ENCODE measurements at regions of chr20 and their contacts with region 1.

Region 1: DNA sequence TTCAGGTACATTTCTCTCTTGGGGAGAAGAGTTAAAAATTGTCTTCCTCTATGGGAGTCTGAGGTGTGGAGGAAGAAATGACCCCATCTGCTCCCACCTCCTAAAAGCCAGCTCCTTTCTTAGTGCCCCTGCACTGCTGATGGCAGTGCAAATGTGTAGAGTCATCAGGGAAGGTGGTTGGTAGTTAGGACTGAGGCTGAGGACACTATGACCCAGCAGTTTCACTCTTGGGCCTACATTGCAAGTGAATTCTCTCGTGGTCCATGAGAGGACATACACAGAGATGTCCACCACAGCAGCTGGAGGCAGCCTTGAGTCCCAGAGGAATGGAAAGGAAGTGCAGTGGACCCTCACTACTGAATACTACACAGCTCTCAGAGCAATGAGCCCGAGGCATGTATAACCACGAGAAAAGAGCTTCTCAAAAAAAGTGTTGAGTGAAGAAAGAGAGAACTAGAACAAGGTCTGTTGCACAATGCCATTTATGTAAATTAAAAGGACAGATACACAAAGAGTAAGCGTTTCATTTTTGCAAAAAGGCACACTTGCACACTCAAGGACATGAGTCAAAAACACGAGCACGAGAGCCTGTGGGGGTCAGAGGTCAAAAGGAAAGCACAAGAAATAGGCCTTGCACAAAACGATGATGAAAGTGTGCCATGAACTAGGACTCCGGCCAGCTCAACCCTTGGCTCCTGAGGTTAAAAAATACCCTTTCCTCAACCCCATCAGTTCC is 308.2 kb upstream of the PRND start:
- DNase-seq: no peak
- H3K4me3 ChIP-seq: no peak overlapping the region
- H3K27ac ChIP-seq: no peak overlapping the region
- H3K4me1 ChIP-seq: no peaks in the 10 kb centered on the region
- H3K27me3 ChIP-seq: no peaks in the 10 kb centered on the region
- CTCF ChIP-seq: no peak

Region 2: GRCh38 chr20:4299773-4300172 is 113.7 kb before region 1 on chr20:
- CTCF ChIA-PET with region 1: interaction called, 12 read pairs
- POLR2A ChIA-PET with region 1: no interaction called
- intact Hi-C with region 1: no loop called
- DNase-seq: no peak
- H3K4me3 ChIP-seq: no peak overlapping the region
- H3K27ac ChIP-seq: no peak overlapping the region
- H3K4me1 ChIP-seq: no peaks in the 10 kb centered on the region
- H3K27me3 ChIP-seq: peaks cover 12% of the 10 kb centered on the region; the same call in 1 of the 2 replicates
- CTCF ChIP-seq: no peak

Measured in PC-9 (cell line).